IMR-90 (cell line): ENCODE measurements at regions of chr11 and their contacts with region 1.

Region 1: DNA sequence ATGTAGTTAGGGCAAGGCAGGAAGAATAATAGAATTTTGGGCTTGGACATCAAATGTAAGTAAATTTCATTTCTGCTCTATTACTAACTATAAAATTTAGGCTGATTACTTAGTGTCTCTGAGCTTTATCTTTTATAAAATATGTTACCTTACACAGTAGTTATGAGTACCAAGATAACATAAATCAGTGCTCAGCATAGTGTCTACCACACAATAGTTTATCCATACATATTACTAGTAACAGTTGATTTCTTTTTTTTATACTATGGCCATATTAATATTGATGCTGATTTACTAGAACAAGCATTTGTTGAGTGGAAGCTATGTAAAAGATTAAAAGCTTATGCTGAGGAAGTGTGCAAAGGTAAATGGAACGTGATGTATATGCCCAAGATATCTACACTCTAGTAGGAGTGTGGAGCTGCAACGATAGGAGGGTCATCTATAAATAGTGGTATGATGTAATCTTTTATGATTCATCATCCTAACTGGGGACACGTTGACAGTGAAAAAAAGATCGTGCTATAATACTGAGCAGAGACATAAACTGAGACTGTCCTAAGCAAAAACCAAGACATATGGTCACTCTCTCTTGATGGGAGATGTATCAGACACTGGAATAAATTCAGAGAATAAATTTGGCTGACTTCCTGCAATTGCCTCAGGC is 8.7 kb upstream of the SLC5A12 start:
- DNase-seq: peak; percentile 1
- ATAC-seq: no peak
- H3K4me3 ChIP-seq: no peak overlapping the region
- H3K27ac ChIP-seq: no peak overlapping the region
- H3K4me1 ChIP-seq: no peaks in the 10 kb centered on the region
- H3K27me3 ChIP-seq: no peaks in the 10 kb centered on the region
- CTCF ChIP-seq: no peak
- POLR2A ChIP-seq: no peak
- RAD21 ChIP-seq: no peak

Region 2: GRCh38 chr11:26106726-26107125 is 623.8 kb before region 1 on chr11:
- CTCF ChIA-PET with region 1: no interaction called
- POLR2A ChIA-PET with region 1: no interaction called
- dilution Hi-C with region 1: no loop called
- in situ Hi-C with region 1: no loop called
- intact Hi-C with region 1: no loop called
- DNase-seq: no peak
- ATAC-seq: no peak
- H3K4me3 ChIP-seq: no peak overlapping the region
- H3K27ac ChIP-seq: no peak overlapping the region
- H3K4me1 ChIP-seq: peaks cover 6% of the 10 kb centered on the region
- H3K27me3 ChIP-seq: no peaks in the 10 kb centered on the region
- CTCF ChIP-seq: no peak
- POLR2A ChIP-seq: no peak
- RAD21 ChIP-seq: no peak

Region 3: GRCh38 chr11:27055118-27055557 is 324.6 kb after region 1 on chr11:
- CTCF ChIA-PET with region 1: no interaction called
- POLR2A ChIA-PET with region 1: no interaction called
- dilution Hi-C with region 1: no loop called
- in situ Hi-C with region 1: no loop called
- intact Hi-C with region 1: no loop called
- DNase-seq: peak; percentile 37
- ATAC-seq: peak; percentile 32
- H3K4me3 ChIP-seq: no peak overlapping the region
- H3K27ac ChIP-seq: no peak overlapping the region
- H3K4me1 ChIP-seq: peaks cover 3% of the 10 kb centered on the region; the same call in 1 of the 2 replicates
- H3K27me3 ChIP-seq: no peaks in the 10 kb centered on the region
- CTCF ChIP-seq: no peak
- POLR2A ChIP-seq: no peak
- RAD21 ChIP-seq: no peak

Region 4: DNA sequence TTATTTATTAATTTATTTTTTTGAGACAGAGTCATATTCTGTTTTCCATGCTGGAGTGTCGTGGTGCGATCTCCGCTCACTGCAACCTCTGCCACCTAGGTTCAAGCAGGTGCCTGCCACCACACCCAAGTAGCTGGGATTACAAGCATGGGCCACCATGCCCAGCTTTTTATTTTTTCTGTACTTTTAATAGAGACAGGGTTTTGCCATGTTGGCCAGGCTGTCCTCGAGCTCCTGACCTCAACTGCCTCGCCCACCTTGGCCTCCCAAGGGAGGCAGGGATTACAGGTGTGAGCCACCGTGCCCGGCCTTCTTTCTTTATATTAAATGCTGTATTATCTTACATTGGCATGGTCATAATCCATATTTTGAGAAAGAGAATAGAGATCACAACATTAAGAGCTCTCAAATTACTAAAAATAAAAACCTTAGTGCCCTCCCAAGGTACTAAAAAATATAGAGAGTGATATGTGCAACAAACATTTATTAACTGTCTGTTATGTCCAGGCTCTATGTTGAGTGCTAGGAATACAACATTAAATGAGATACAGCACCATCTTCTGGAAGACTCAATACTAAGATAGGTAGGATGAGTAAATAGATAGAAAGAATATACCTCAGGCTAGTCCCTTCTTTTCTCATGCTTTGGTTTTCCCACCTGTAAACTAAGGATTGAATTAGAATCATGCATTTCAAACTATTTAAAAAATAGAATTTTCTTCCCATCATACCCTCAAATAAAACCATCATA is 394.1 kb after region 1 on chr11:
- CTCF ChIA-PET with region 1: no interaction called
- POLR2A ChIA-PET with region 1: no interaction called
- dilution Hi-C with region 1: loop called (anchors 25 kb)
- in situ Hi-C with region 1: no loop called
- intact Hi-C with region 1: no loop called
- DNase-seq: peak; percentile 42
- ATAC-seq: peak; percentile 71
- H3K4me3 ChIP-seq: no peak overlapping the region
- H3K27ac ChIP-seq: no peak overlapping the region
- H3K4me1 ChIP-seq: no peaks in the 10 kb centered on the region
- H3K27me3 ChIP-seq: peaks cover 1% of the 10 kb centered on the region; the same call in 1 of the 2 replicates
- CTCF ChIP-seq: peak; percentile 53
- POLR2A ChIP-seq: no peak
- RAD21 ChIP-seq: peak; percentile 62